RWPE1 (cell line): ENCODE measurements at regions of chr9 and their contacts with region 1.

Region 1: DNA sequence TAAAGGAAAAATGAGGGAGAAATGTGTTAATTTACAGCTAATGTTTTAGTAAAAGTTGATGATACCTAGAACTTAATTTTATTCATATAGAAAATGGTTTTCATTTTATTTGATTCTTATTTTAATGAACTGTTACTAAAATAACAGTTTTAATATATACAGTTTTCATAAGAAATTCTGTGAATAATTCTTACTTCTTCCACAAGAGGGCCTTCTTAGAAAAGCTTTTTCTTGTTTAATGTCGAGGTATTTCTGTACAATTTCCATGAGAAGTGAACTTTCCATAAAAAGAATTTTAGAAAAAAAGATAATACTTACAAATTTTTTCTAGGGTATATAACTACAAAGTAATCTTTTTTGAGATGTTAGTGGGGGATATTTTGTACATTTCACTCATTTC is 73.9 kb downstream of the KLF9 start:
- DNase-seq: peak; percentile 17
- H3K27ac ChIP-seq: no peak overlapping the region
- CTCF ChIP-seq: peak; percentile 65

Region 2: GRCh38 chr9:70602321-70603019 is 261.9 kb after region 1 on chr9:
- CTCF ChIA-PET with region 1: interaction called, 23 read pairs
- POLR2A ChIA-PET with region 1: no interaction called
- DNase-seq: peak; percentile 85
- H3K27ac ChIP-seq: no peak overlapping the region
- CTCF ChIP-seq: peak; percentile 83